ENCODE measurements at regions of chr21 and their contacts with region 1.

Region 1: GRCh38 chr21:37072988-37073416 is at the starts of genes PIGP and TTC3:
- DNase-seq: peak in 1 of 2 donors; percentile 90
- H3K4me3 ChIP-seq: peak within 1 kb of the TSS; percentile 85 to 98
- H3K27ac ChIP-seq: peak within 1 kb of the TSS; percentile 97
- H3K4me1 ChIP-seq: peaks cover 24% of the 10 kb centered on the region
- H3K27me3 ChIP-seq: no peaks in the 10 kb centered on the region
- CTCF ChIP-seq: no peak
- POLR2A ChIP-seq: peak in 1 of 2 donors; percentile 93
- total RNA-seq, gene PIGP: 13.0 TPM
- total RNA-seq, gene TTC3: 98.0 TPM

Region 2: GRCh38 chr21:36989699-36990507 is 83.1 kb before region 1 on chr21:
- intact Hi-C with region 1: loop called (anchors 2 kb)
- DNase-seq: no peak
- H3K4me3 ChIP-seq: peak overlapping the region; percentile 54 to 66
- H3K27ac ChIP-seq: peak overlapping the region; percentile 91
- H3K4me1 ChIP-seq: peaks cover 6% of the 10 kb centered on the region
- H3K27me3 ChIP-seq: no peaks in the 10 kb centered on the region
- CTCF ChIP-seq: peak; percentile 70 to 99 (median 92)
- POLR2A ChIP-seq: peak in 1 of 2 donors; percentile 17

Region 3: GRCh38 chr21:37199057-37199924 is 126.3 kb after region 1 on chr21:
- intact Hi-C with region 1: no loop called
- DNase-seq: peak in 1 of 2 donors; percentile 69
- H3K4me3 ChIP-seq: no peak overlapping the region
- H3K27ac ChIP-seq: no peak overlapping the region
- H3K4me1 ChIP-seq: no peaks in the 10 kb centered on the region
- H3K27me3 ChIP-seq: no peaks in the 10 kb centered on the region
- CTCF ChIP-seq: no peak
- POLR2A ChIP-seq: no peak